ENCODE measurements at regions of chr3 and their contacts with region 1.

Region 1: DNA sequence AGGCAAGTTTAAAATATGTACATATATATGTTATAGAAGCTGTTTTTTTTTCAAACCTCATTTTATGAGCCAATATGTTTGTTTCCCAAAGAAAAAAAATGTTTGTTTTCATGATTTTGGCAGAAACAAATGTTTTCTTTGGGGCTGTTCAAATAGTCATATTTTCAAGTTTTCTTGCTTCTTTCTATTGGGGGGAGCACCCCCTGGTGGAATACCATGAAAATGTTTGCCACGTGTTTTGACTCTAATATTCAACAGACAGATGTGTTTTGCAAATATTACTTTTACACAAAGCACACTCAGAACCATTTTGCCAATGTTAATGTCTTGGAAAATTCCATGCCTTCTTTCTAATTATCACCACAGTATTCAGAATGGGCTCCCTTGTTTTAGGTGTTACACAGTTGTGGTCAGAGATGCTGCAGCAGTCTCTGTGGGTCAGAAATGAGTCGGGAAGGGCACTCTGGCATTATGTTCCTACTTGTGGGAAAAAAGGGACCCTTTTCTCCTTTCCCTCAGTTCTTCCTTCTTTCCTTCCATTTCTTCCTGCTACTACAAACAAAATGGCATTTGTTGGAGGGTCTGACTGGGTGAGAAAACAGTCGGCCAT is 817.0 kb downstream of the TUSC7 start:
- DNase-seq: no peak
- H3K4me3 ChIP-seq: no peak overlapping the region; a peak in 1 of 4 replicates
- H3K27ac ChIP-seq: no peak overlapping the region
- H3K4me1 ChIP-seq: peaks cover 6 to 17% of the 10 kb centered on the region in 2 experiments; a peak in 2 of 4 replicates
- H3K27me3 ChIP-seq: no peaks in the 10 kb centered on the region
- CTCF ChIP-seq: peak; percentile 82
- EP300 ChIP-seq: no peak
- RAD21 ChIP-seq: peak; percentile 81

Region 2: DNA sequence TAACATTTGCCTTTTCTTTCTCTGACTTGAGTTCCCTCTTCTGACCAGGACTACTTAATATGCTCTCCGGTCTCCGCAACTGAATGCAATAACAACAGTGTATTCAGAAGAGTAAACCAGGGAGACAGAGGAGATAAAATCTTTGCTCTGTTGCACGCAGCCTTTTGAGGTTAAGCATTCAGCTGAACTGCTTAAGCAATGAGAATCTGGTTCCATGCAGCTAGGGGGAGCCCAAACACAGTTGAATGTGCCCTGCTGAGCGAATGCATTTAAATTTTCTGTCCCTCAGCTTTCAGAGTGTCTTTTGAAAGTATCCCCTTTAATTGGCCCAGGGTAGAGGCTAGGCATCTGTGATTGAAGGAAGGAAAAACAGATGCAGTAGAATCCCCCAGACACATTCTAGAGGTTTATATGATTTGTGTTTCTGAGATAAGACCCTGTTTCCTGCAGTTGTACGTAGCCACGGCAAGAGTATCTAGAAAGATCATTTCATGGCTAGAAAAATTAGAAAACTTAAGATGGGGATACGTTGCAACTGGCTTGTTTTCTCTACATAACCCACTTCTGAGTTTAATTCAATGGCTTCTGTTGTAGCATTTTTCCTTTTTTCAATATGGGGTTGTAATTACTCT is 507.4 kb before region 1 on chr3:
- CTCF ChIA-PET with region 1: interaction called, 14 read pairs
- POLR2A ChIA-PET with region 1: no interaction called
- DNase-seq: peak; percentile 60
- H3K4me3 ChIP-seq: peak overlapping the region in 1 of 2 experiments; percentile 51; a peak in 2 of 4 replicates
- H3K27ac ChIP-seq: peak overlapping the region in 1 of 2 experiments; percentile 86; a peak in 2 of 4 replicates
- H3K4me1 ChIP-seq: peaks cover 0 to 27% of the 10 kb centered on the region in 2 experiments; a peak in 2 of 4 replicates
- H3K27me3 ChIP-seq: no peaks in the 10 kb centered on the region
- CTCF ChIP-seq: peak; percentile 92
- EP300 ChIP-seq: 0 out of 4 replicates have a peak, but pooled peaks of 1 of the 2 experiments have one; percentile 28
- RAD21 ChIP-seq: peak; percentile 98

Region 3: GRCh38 chr3:117407317-117407716 is 119.3 kb before region 1 on chr3:
- CTCF ChIA-PET with region 1: no interaction called
- POLR2A ChIA-PET with region 1: no interaction called
- DNase-seq: no peak
- H3K4me3 ChIP-seq: no peak overlapping the region
- H3K27ac ChIP-seq: peak overlapping the region in 1 of 2 experiments; percentile 12; a peak in 2 of 4 replicates
- H3K4me1 ChIP-seq: peaks cover 0 to 23% of the 10 kb centered on the region in 2 experiments; a peak in 2 of 4 replicates
- H3K27me3 ChIP-seq: no peaks in the 10 kb centered on the region
- CTCF ChIP-seq: peak; percentile 57
- EP300 ChIP-seq: no peak
- RAD21 ChIP-seq: peak; percentile 38